B cell (primary cell): ENCODE measurements at regions of chr20 and their contacts with region 1.

Region 1: GRCh38 chr20:3767427-3768341 is at the start of gene ADISSP:
- DNase-seq: peak; percentile 97
- ATAC-seq: peak; percentile 87
- H3K4me3 ChIP-seq: peak within 1 kb of the TSS; percentile 48 to 97 (median 77)
- H3K4me3 Mint-ChIP-seq: peak within 1 kb of the TSS; percentile 96
- H3K27ac ChIP-seq: peak within 1 kb of the TSS; percentile 98 to 99
- H3K27ac Mint-ChIP-seq: peak within 1 kb of the TSS; percentile 97
- H3K4me1 ChIP-seq: peaks cover 12 to 31% of the 10 kb centered on the region in 2 donors
- H3K4me1 Mint-ChIP-seq: peaks cover 27% of the 10 kb centered on the region
- H3K27me3 ChIP-seq: no peaks in the 10 kb centered on the region
- H3K27me3 Mint-ChIP-seq: no peaks in the 10 kb centered on the region
- CTCF ChIP-seq: no peak
- total RNA-seq, gene ADISSP: 18.4 and 19.1 TPM in 2 replicates

Region 2: GRCh38 chr20:3590164-3590563 is 177.5 kb before region 1 on chr20:
- CTCF ChIA-PET with region 1: no interaction called
- POLR2A ChIA-PET with region 1: no interaction called
- intact Hi-C with region 1: no loop called
- DNase-seq: no peak
- ATAC-seq: no peak
- H3K4me3 ChIP-seq: no peak overlapping the region
- H3K4me3 Mint-ChIP-seq: no peak overlapping the region
- H3K27ac ChIP-seq: no peak overlapping the region
- H3K27ac Mint-ChIP-seq: no peak overlapping the region
- H3K4me1 ChIP-seq: no peaks in the 10 kb centered on the region
- H3K4me1 Mint-ChIP-seq: no peaks in the 10 kb centered on the region
- H3K27me3 ChIP-seq: no peaks in the 10 kb centered on the region
- H3K27me3 Mint-ChIP-seq: no peaks in the 10 kb centered on the region
- CTCF ChIP-seq: no peak

Region 3: GRCh38 chr20:3679749-3680700 is 87.7 kb before region 1 on chr20:
- CTCF ChIA-PET with region 1: interaction called, 17 read pairs
- POLR2A ChIA-PET with region 1: no interaction called
- intact Hi-C with region 1: loop called (anchors 1 kb)
- DNase-seq: no peak
- ATAC-seq: no peak
- H3K4me3 ChIP-seq: no peak overlapping the region
- H3K4me3 Mint-ChIP-seq: no peak overlapping the region
- H3K27ac ChIP-seq: no peak overlapping the region
- H3K27ac Mint-ChIP-seq: no peak overlapping the region
- H3K4me1 ChIP-seq: peaks cover 0 to 7% of the 10 kb centered on the region in 2 donors
- H3K4me1 Mint-ChIP-seq: peaks cover 4% of the 10 kb centered on the region
- H3K27me3 ChIP-seq: peaks cover 0 to 38% (median 6%) of the 10 kb centered on the region in 4 experiments
- H3K27me3 Mint-ChIP-seq: peaks cover 57% of the 10 kb centered on the region
- CTCF ChIP-seq: no peak

Region 4: GRCh38 chr20:3781153-3781910 is 13.6 kb after region 1 on chr20 and contains the start of gene SPEF1:
- CTCF ChIA-PET with region 1: interaction called, 38 read pairs
- POLR2A ChIA-PET with region 1: interaction called, 18 read pairs
- intact Hi-C with region 1: loop called (anchors 1 kb)
- DNase-seq: peak; percentile 78
- ATAC-seq: peak; percentile 64
- H3K4me3 ChIP-seq: peak within 1 kb of the TSS in 3 of 5 experiments; percentile 36 to 49 (median 38)
- H3K4me3 Mint-ChIP-seq: peak within 1 kb of the TSS; percentile 79
- H3K27ac ChIP-seq: no peak within 1 kb of the TSS
- H3K27ac Mint-ChIP-seq: peak within 1 kb of the TSS; percentile 32
- H3K4me1 ChIP-seq: peaks cover 29 to 45% of the 10 kb centered on the region in 2 donors
- H3K4me1 Mint-ChIP-seq: peaks cover 52% of the 10 kb centered on the region
- H3K27me3 ChIP-seq: peaks cover 0 to 15% (median 4%) of the 10 kb centered on the region in 4 experiments
- H3K27me3 Mint-ChIP-seq: no peaks in the 10 kb centered on the region
- CTCF ChIP-seq: no peak
- total RNA-seq, gene SPEF1: not detected in 2 replicates

Region 5: DNA sequence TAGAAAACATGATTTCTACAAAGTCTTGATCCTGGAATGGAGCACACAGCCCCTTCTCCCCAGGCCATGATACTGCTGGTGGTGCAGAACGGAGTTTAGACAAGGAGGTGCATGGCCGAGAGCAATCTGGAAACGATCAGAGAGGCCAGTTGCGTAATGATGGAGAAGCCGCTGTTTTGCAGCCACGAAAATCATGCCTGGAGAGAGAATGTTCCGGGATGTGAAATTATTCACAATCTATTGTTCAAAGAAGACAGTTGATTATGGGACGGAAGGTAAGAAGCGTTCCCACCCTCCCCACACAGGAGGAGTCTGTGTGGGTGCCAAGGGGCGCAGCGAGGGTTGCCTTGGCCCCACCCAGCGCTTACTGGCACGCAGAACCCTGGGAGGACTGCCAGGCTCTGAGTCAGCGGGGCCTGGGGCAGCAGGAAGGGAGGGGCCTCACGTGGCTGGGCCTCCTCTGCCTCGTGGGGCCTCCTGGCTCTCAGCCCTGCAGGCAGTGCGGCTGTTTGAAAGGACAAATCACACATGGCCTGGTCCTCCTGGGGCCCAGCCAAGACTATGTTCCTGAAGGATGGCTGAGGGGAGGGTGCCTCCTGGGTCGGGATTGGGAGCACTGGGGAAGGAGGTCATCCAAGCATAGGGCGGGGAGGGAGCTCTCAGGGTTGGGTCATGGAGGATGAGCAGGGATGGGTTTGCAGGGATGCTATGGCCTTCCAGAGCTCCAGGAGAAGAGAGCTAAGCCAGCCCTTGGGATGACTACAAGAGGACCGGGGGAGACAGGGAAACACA is 44.0 kb after region 1 on chr20:
- CTCF ChIA-PET with region 1: interaction called, 11 read pairs
- POLR2A ChIA-PET with region 1: interaction called, 3 read pairs
- intact Hi-C with region 1: no loop called
- DNase-seq: peak; percentile 47
- ATAC-seq: peak; percentile 99
- H3K4me3 ChIP-seq: peak overlapping the region in 3 of 5 experiments; percentile 25 to 30 (median 25)
- H3K4me3 Mint-ChIP-seq: peak overlapping the region; percentile 87
- H3K27ac ChIP-seq: peak overlapping the region in 1 of 2 donors; percentile 35
- H3K27ac Mint-ChIP-seq: peak overlapping the region; percentile 81
- H3K4me1 ChIP-seq: peaks cover 8 to 19% of the 10 kb centered on the region in 2 donors
- H3K4me1 Mint-ChIP-seq: peaks cover 17% of the 10 kb centered on the region
- H3K27me3 ChIP-seq: no peaks in the 10 kb centered on the region
- H3K27me3 Mint-ChIP-seq: no peaks in the 10 kb centered on the region
- CTCF ChIP-seq: no peak

Region 6: DNA sequence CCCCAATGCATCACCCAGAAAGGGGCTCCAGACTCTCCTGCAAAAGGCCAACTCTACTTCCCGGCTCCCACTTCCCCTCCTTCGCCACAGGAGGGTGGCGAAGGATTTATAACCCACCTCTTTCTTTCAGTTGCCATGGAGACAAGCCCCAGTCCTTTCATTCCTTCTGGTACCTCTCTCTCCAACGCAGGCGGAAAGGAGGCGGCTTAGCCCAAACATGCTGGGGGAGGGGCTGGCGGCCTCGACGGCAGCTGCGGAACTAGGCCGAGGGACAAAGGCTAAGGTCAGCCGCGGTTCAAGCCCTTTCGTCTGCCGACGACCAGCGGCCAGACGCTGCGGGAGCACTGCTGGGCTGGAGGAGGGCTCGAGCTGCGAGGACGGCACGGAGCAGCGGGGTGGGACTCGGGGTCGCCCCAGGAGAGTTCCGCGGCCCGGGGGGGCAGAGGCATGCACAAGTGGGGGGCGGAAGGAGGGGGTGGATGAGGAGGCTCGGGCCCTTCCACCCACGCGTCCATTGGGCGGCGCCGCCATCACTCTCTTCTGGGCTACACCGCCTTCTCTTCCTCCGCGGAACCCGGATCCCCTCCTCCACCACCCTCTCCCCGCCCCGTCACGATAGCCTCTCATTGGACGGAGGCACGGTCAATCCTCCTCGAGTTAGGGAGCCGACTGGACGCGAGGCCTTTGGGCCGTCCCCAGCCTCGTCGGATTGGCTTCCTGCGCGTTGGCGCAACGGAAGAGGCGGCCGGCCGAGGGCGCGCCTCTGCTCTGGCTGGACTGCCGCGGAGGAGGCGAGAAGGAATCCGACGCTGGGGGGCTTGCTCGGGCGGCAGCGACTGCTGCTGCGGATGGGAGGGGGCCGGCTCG is 121.2 kb after region 1 on chr20 and contains the start of gene PANK2:
- CTCF ChIA-PET with region 1: interaction called, 6 read pairs
- POLR2A ChIA-PET with region 1: no interaction called
- intact Hi-C with region 1: loop called (anchors 1 kb)
- DNase-seq: peak; percentile 97
- ATAC-seq: peak; percentile 96
- H3K4me3 ChIP-seq: peak within 1 kb of the TSS; percentile 70 to 90 (median 86)
- H3K4me3 Mint-ChIP-seq: peak within 1 kb of the TSS; percentile 97
- H3K27ac ChIP-seq: peak within 1 kb of the TSS; percentile 72 to 90
- H3K27ac Mint-ChIP-seq: peak within 1 kb of the TSS; percentile 97
- H3K4me1 ChIP-seq: peaks cover 44 to 50% of the 10 kb centered on the region in 2 donors
- H3K4me1 Mint-ChIP-seq: peaks cover 54% of the 10 kb centered on the region
- H3K27me3 ChIP-seq: no peaks in the 10 kb centered on the region
- H3K27me3 Mint-ChIP-seq: no peaks in the 10 kb centered on the region
- CTCF ChIP-seq: peak; percentile 19
- total RNA-seq, gene PANK2: 63.3 and 70.6 TPM in 2 replicates